ENCODE measurements at regions of chr2 and their contacts with region 1.

Region 1: DNA sequence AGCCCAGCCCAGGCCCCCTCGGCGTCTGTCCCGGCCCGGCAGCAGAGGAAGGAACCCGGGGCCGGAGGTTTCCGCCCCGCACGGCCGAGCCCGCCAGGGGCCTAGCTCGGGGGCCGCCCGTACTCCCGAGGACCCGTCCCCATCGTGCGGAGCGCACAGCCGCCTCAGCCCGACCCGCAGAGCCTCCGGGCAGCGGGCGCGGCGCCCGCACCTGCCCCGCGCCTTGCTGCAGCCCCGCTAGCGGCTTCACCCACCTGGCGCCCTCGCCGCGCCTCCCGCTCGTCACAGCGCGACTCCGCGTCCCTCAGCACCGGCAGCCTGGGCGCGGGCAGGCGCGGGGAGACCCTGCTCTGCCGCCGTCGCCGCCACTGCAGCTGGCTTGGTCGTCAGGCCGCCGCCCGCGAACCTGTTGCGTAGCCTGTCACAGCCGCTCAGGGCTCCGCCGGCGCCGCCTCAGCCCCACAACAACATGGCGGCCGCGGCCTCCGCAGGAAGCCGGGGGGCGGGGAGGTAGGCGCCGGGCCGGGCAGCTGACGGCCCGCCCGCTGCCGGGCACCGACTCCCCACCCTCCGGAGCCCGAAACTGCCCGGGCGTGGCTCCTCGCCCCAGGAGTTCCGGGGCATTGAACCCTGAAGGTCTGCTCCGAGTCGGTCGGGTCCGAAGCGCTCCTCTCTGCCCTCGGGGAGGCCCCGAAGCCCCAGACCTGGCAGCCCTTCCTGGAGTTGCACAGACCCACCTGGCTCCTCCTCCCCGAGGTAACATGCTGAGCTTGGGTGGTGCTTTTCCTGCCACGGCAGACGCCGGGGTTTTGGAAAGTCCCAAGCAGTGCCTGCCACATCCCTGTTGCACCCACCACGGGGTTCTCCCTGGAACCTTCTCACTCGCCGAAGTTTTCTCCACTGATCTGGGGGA is at the start of gene ITSN2:
- DNase-seq: peak; percentile 90
- ATAC-seq: peak; percentile 89
- H3K4me3 Mint-ChIP-seq: peak within 1 kb of the TSS; percentile 84
- H3K27ac Mint-ChIP-seq: peak within 1 kb of the TSS; percentile 94
- H3K4me1 Mint-ChIP-seq: peaks cover 29% of the 10 kb centered on the region
- H3K27me3 Mint-ChIP-seq: no peaks in the 10 kb centered on the region
- total RNA-seq, gene ITSN2: 46.0 to 49.6 TPM

Region 2: GRCh38 chr2:24315669-24316068 is 44.6 kb before region 1 on chr2:
- CTCF ChIA-PET with region 1: no interaction called
- POLR2A ChIA-PET with region 1: no interaction called
- intact Hi-C with region 1: loop called in 1 of 2 experiments (anchors 1 kb)
- DNase-seq: peak; percentile 34
- ATAC-seq: peak; percentile 79
- H3K4me3 Mint-ChIP-seq: no peak overlapping the region
- H3K27ac Mint-ChIP-seq: peak overlapping the region; percentile 30
- H3K4me1 Mint-ChIP-seq: peaks cover 35% of the 10 kb centered on the region
- H3K27me3 Mint-ChIP-seq: no peaks in the 10 kb centered on the region

Region 3: GRCh38 chr2:24448797-24449196 is 88.5 kb after region 1 on chr2:
- CTCF ChIA-PET with region 1: no interaction called
- POLR2A ChIA-PET with region 1: no interaction called
- intact Hi-C with region 1: no loop called
- DNase-seq: no peak
- ATAC-seq: no peak
- H3K4me3 Mint-ChIP-seq: no peak overlapping the region
- H3K27ac Mint-ChIP-seq: no peak overlapping the region
- H3K4me1 Mint-ChIP-seq: no peaks in the 10 kb centered on the region
- H3K27me3 Mint-ChIP-seq: peaks cover 3% of the 10 kb centered on the region

Region 4: GRCh38 chr2:24521975-24522639 is 161.8 kb after region 1 on chr2:
- CTCF ChIA-PET with region 1: no interaction called
- POLR2A ChIA-PET with region 1: no interaction called
- intact Hi-C with region 1: no loop called
- DNase-seq: no peak
- ATAC-seq: peak; percentile 93
- H3K4me3 Mint-ChIP-seq: peak overlapping the region; percentile 51
- H3K27ac Mint-ChIP-seq: peak overlapping the region; percentile 90
- H3K4me1 Mint-ChIP-seq: peaks cover 48% of the 10 kb centered on the region
- H3K27me3 Mint-ChIP-seq: no peaks in the 10 kb centered on the region

Measured in activated CD4-positive, alpha-beta T cell treated with anti-CD3 and anti-CD28 coated beads for 36 hours (primary cell).